Head of caudate nucleus (tissue), 42 donors: ENCODE measurements at regions of chr17 and their contacts with region 1.

Region 1: DNA sequence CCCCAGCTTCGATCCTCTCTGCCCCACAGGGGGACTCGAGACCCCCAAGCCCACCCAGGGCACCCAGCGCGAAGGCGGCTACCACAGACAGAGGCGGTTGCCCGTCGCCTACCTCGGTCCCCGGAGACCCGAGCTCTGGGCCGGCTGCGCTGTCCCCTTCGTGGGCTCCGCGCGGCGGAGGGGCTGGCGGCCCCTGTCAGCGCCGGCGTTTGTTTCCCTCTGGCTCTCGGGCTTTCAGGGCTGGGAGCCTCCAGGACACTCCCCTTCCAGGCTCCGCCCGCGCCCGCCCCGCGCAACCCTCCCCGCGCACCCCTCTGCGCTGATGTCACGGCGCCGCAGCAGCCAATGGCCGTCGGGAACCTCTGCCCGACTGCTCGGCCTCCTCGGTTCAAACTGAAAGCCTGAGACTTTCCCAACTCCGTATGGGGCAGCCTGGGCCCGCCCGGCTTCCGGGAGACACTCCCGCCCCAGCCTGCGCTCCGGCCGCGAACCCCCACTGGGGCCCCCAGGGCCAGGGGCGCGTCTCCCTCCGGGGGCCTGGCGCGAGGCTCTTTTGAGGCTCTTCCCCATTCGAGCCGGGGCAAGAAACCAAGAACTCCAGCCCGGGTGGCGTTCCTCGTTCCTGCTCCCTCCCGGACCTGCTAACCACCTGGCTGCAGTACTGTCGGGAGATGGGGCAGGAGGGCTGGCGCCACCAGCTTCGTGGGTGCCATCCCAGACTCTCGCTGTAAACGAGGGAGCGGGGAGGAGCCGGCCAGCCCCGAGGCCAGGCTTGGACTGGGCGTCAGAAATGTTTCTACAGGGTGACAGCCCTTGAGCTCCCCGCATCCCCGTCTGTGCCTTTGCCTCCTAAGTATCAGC is at the start of gene CDC42EP4:
- DNase-seq: peak; percentile 89 to 98 (median 95)

Region 2: DNA sequence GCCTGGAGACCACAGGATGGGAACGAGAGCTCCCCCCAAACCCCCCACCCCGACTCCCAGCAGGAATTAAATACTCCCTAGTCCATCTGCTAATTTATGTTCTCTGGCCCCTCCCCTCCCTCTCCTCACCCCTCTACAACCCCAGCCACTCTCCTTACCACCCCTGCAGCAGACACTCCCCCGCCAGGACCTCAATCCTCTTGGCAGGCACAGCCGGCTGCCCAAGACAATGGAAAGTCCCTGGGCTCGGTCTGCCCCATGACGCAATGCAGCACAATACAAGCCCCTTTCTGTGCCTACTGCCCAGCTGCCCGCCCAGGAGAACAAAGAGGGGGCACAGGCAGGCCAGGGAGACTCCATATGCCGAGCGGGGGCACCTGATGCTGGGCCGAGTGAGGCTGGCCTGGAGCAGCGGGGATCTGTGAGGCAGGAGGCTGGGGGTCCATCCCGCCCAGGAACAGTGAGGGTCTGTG is 30.1 kb after region 1 on chr17:
- intact Hi-C with region 1: loop called (anchors 2 kb)
- DNase-seq: peak; percentile 82 to 97 (median 94)